Panc1 (cell line): ENCODE measurements at regions of chr11 and their contacts with region 1.

Region 1: GRCh38 chr11:14537134-14537599 is 17.0 kb upstream of the PSMA1 start:
- DNase-seq: peak; percentile 24
- ATAC-seq: peak; percentile 56; the same call in 1 of the 2 replicates
- H3K4me3 ChIP-seq: no peak overlapping the region
- H3K27ac ChIP-seq: no peak overlapping the region
- H3K4me1 ChIP-seq: peaks cover 3% of the 10 kb centered on the region; the same call in 1 of the 2 replicates
- H3K27me3 ChIP-seq: no peaks in the 10 kb centered on the region
- CTCF ChIP-seq: peak; percentile 83

Region 2: DNA sequence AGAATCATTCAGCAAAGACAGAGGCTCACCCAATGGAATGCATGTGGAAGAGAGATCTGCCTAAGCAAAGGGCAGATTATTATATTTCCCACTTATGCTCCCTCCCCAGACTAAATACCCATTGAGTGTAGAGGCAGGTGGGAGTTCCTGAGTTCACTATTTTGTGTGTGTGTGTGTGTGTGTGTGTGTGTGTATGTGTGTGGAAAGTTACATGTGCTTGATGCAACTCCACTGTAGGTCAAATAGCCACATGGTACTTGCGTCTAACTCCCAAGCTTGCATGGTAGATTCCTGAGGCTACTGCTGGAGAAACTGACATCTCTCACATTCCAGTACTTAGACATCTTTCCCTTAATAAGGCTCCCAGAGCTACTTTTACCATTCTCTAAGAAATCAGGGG is 34.1 kb before region 1 on chr11:
- CTCF ChIA-PET with region 1: no interaction called
- POLR2A ChIA-PET with region 1: interaction called, 12 read pairs
- in situ Hi-C with region 1: no loop called
- intact Hi-C with region 1: no loop called
- DNase-seq: no peak
- ATAC-seq: no peak
- H3K4me3 ChIP-seq: no peak overlapping the region
- H3K27ac ChIP-seq: no peak overlapping the region
- H3K4me1 ChIP-seq: peaks cover 5% of the 10 kb centered on the region; the same call in 1 of the 2 replicates
- H3K27me3 ChIP-seq: no peaks in the 10 kb centered on the region
- CTCF ChIP-seq: no peak

Region 3: DNA sequence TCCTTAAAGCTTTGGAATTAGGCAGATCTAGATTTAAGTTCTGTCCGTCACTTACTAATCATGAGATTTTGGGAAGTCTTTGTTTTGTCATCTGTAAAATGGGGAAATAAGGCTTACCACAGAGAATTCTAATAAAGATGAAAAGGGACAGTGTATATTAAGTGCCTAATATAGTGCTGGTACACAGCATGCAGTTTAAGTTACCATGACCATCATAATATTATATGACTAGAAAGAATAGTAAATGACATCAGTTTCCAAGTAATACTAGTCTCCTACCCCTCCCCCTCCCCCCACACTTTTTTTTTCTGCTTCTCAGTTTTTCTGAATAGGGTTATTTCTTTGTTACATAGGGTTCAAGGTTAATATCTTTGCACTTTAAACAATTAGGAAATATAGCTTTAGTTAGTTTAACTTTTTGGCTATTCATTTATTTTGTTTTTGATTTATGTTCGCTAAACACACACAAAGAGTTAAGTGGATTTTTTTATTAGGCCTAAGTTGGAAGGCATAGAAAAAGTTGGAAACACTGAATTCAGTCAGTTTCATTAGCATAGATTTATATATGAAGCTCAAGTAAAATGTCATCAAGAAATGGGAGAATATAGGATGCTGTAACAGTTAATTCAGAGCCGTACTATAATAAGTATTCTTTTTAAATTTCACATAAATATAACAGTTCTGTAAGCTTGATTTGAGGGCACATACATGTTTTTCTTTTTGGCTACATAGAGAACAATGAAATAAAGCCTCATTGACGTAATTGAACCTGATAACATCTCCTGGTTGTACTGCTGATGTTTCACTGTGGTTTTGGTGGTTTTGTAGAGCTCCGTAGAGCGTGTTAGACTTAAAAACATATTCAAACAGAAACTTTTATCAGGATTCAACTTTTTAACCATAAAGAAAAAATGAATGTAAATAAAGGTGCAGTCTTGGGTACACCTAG is 227.7 kb after region 1 on chr11:
- CTCF ChIA-PET with region 1: no interaction called
- POLR2A ChIA-PET with region 1: no interaction called
- in situ Hi-C with region 1: no loop called
- intact Hi-C with region 1: loop called (anchors 10 kb)
- DNase-seq: no peak
- ATAC-seq: no peak
- H3K4me3 ChIP-seq: no peak overlapping the region
- H3K27ac ChIP-seq: no peak overlapping the region
- H3K4me1 ChIP-seq: no peaks in the 10 kb centered on the region; the same call in 1 of the 2 replicates
- H3K27me3 ChIP-seq: no peaks in the 10 kb centered on the region
- CTCF ChIP-seq: no peak